H1 (cell line): ENCODE measurements at regions of chr1 and their contacts with region 1.

Region 1: GRCh38 chr1:202880961-202881460 is 7.9 kb downstream of the RABIF start:
- DNase-seq: no peak
- H3K4me3 ChIP-seq: no peak overlapping the region
- H3K27ac ChIP-seq: no peak overlapping the region
- H3K4me1 ChIP-seq: peaks cover 0 to 7% (median 2%) of the 10 kb centered on the region in 4 experiments; a peak in 3 of 7 replicates
- H3K27me3 ChIP-seq: no peaks in the 10 kb centered on the region
- CTCF ChIP-seq: no peak
- EP300 ChIP-seq: no peak
- POLR2A ChIP-seq: no peak
- RAD21 ChIP-seq: no peak

Region 2: DNA sequence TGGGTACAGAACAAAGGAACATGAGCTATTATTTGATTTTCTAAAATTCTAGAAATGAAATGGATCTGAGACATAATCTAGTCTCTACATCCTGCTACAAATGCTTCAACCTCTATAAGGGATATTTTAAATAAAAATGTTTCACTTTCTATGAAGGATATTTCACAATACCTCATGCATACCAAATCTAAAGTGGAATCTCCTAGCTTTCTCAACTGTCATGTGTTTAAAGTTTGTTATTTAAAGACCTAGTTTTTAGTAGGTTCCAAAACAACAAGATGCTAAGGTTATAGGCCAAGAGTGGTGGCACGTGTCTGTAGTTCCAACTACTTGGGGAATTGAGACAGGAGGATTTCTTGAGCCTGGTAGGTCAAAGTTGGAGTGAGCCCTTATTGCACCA is 120.4 kb before region 1 on chr1:
- CTCF ChIA-PET with region 1: no interaction called
- POLR2A ChIA-PET with region 1: no interaction called
- DNase-seq: no peak
- H3K4me3 ChIP-seq: no peak overlapping the region
- H3K27ac ChIP-seq: no peak overlapping the region
- H3K4me1 ChIP-seq: no peaks in the 10 kb centered on the region
- H3K27me3 ChIP-seq: no peaks in the 10 kb centered on the region
- CTCF ChIP-seq: no peak
- EP300 ChIP-seq: no peak
- POLR2A ChIP-seq: no peak
- RAD21 ChIP-seq: no peak

Region 3: DNA sequence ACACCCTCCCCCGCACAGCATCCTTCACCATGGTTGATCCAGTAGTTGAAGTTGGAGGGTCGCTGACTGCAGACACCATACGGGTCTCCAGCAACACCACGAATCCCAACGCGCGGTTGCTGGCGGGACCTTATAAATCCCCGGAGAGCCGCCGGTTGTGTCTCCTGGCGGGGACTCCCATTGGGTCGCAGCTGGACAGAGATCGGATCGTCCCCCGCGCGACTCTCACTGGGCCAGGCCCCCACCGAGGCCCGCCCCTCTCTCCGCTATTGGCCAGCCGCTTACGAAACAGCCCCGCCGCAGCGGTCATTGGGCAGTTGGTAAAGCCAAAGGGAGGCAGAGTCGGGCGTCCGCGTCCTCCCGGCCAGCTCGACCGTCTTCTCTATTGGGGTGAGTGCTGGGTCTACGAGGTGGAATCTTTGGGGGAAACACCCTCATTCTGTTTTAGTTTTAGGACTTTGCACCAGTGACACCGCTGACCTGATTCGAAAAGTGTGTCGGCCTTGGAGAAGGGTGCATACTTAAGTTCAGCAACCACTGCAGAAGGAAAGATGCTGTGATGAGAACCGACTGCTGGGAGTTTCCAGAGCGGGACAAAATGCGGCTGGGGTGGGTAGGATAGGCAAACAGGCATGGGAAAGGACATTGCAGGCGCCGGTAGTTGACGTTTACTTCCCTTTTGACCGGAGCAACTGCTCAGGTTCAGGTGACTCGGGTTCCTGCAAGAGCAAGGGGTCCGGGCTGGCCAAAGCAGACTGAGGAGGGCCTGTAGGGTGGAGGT is 19.4 kb before region 1 on chr1:
- CTCF ChIA-PET with region 1: interaction called, 10 read pairs
- POLR2A ChIA-PET with region 1: interaction called, 8 read pairs
- DNase-seq: peak; percentile 78 to 92
- H3K4me3 ChIP-seq: peak overlapping the region; percentile 81 to 92 (median 88)
- H3K27ac ChIP-seq: peak overlapping the region; percentile 91; the same call in 1 of the 2 replicates
- H3K4me1 ChIP-seq: peaks cover 0 to 8% (median 3%) of the 10 kb centered on the region in 4 experiments; a peak in 3 of 7 replicates
- H3K27me3 ChIP-seq: no peaks in the 10 kb centered on the region
- CTCF ChIP-seq: no peak
- EP300 ChIP-seq: no peak
- POLR2A ChIP-seq: peak in 1 of 2 experiments; percentile 74; a peak in 2 of 3 replicates
- RAD21 ChIP-seq: no peak; a peak in 1 of 4 replicates

Region 4: DNA sequence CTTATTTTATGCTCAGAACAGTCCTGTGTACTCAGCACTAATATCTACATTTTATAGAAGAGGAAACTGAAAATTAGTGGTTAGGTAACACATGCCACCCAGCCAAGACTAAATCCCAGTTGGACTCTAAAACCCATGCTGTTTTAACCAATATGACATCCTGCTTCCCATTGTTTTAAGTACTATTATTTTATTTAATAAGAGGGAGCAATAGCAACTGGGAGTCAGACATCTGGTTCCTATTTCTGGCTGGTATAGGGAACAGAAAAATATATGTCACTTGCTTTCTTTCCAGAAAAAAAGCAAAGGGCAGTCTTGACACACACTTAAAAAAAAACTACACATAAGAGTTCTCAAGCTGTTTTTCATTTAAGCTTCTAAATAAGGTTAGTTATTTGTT is 34.1 kb after region 1 on chr1:
- CTCF ChIA-PET with region 1: no interaction called
- POLR2A ChIA-PET with region 1: no interaction called
- DNase-seq: no peak
- H3K4me3 ChIP-seq: no peak overlapping the region
- H3K27ac ChIP-seq: no peak overlapping the region
- H3K4me1 ChIP-seq: no peaks in the 10 kb centered on the region
- H3K27me3 ChIP-seq: no peaks in the 10 kb centered on the region
- CTCF ChIP-seq: no peak
- EP300 ChIP-seq: no peak
- POLR2A ChIP-seq: no peak
- RAD21 ChIP-seq: no peak